ENCODE measurements at regions of chr7 and their contacts with region 1.

Region 1: DNA sequence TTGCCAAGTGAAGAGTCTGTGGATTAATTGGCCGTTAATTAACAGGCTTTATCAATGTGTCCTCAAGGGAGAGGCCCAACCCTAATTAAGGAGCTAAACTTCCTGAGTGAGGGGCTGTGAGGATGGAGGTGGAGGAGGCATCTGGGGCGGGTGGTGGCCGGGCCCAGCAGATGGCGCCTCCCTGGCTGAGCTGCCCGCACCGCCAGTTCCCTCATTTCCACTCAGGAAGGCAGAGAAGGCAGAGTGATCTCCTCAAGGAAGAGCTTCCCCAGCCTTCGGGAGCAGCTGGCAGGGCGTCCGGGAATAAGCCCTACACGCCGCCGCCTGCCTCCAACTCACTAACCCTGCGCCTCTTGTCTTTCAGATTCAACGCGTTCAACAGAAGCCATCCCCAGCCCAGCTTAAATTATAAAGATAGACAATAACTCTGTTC is 112.2 kb downstream of the CYTH3 start:
- DNase-seq: peak; percentile 79

Region 2: GRCh38 chr7:6090738-6091505 is 69.3 kb before region 1 on chr7:
- intact Hi-C with region 1: no loop called
- DNase-seq: no peak

Region 3: GRCh38 chr7:6256677-6257535 is 96.7 kb after region 1 on chr7:
- intact Hi-C with region 1: loop called (anchors 5 kb)
- DNase-seq: no peak

Region 4: DNA sequence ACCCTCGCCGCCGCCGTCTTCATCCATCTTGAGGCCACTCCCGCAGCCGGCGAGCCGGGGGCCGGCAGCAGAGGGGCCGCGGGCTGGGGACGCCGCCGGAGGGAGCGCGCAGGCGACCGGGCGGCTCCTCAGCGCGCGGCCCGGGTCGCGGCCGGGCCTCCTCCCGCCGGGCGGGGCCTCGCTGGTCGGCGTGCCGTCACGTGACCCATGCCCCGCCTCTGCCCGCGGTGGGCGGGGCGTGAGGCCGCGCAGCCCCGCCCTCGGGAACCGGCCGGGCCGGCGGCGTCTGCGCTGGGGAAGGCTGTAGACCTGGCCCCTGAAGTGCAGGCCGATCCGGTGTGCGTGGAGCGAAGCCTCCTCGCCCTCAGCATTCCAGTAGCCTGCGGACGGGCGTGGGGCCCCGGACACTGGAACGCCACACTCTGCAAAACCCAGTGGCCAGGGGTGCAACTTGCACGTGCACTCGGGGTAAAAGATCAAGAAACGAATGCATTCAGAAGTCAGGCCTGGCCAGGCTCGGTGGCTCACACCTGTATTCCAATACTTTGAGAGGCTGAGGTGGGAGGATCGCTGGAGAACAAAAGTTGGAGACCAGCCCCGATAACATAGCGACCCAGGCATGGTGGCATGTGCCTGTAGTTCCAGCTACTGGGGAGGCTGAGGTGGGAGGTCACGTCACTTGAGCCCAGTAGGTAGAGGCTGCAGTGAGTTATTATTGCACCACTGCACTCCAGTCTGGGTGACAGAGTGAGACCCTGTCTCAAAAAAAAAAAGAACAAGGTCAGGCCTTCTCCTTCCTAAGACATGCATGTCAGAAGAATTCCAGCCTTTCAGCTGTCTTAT is 112.5 kb after region 1 on chr7 and contains the start of gene CYTH3:
- intact Hi-C with region 1: loop called (anchors 2 kb)
- DNase-seq: peak; percentile 93
- total RNA-seq, gene CYTH3: 24.9 TPM

Region 5: DNA sequence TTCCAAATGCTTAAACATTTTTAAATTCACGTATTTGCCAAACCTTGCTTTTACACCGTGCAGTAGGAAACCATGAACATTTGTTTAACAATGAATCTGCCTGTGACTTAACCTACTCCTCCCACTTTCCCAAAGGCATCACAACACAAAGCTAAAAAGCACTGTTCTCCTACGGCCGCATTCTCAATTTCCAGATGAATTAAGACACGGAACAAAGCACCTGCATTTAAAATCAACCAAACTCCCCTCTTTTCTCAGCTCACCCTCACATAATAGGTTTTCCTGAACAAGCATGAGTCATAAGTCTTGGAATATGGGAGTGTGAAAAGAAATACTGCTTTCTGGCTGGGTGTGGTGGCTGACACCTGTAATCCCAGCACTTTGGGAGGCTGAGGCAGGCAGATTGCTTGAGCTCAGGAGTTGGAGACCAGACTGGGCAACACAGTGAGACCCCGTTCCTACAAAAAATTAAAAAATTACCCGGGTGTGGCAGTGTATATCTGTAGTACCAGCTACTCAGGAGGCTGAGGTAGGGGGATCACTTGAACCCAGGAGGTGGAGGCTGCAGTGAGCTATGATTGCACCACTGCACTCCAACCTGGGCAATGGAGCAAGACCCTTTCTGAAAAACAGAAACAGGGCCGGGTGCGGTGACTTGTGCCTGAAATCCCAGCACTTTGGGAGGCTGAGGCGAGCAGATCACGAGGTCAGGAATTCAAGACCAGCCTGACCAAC is 163.9 kb after region 1 on chr7:
- intact Hi-C with region 1: loop called (anchors 2 kb)
- DNase-seq: no peak

Region 6: GRCh38 chr7:6435486-6436384 is 275.5 kb after region 1 on chr7:
- intact Hi-C with region 1: loop called (anchors 10 kb)
- DNase-seq: peak; percentile 93